Astrocyte of the cerebellum (primary cell): ENCODE measurements at regions of chr7 and their contacts with region 1.

Region 1: DNA sequence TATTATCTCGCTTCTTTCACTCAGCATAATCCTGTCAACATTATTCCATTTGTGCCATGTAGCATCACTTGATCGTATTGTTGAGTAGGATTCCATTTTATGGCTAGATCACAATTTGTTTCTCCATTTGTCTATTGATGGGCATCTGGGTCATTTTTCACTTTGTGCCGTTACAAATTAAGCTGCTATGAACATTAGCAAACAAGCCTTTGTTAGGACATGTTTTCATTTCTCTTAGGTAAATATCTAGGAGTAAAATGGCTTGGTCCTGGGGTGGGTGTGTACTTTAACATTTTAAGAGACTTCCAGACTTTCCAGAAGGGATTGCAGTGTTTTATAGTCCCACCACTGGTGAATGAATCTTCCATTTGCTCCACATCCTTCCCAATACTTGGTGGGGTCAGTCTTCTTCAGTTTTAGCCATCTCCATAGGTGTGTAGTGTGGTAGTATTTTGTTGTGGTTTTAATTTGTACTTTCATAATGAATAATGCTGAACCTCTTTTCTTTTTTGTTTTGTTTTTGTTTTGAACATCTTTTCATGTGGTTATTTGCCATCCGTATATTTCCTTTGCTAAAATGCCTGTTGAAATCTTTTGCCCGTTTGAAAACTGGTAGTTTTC is 86.2 kb downstream of the ANKRD61 start:
- DNase-seq: no peak
- H3K4me3 ChIP-seq: no peak overlapping the region
- CTCF ChIP-seq: no peak

Region 2: GRCh38 chr7:6008668-6009611 is 108.5 kb before region 1 on chr7 and contains the starts of genes AIMP2 and PMS2:
- in situ Hi-C with region 1: loop called (anchors 10 kb)
- DNase-seq: peak; percentile 95
- H3K4me3 ChIP-seq: peak within 1 kb of the TSS; percentile 88
- CTCF ChIP-seq: peak; percentile 12

Region 3: GRCh38 chr7:6148724-6149360 is 31.4 kb after region 1 on chr7:
- in situ Hi-C with region 1: no loop called
- DNase-seq: no peak
- H3K4me3 ChIP-seq: no peak overlapping the region
- CTCF ChIP-seq: no peak

Region 4: GRCh38 chr7:6175645-6176044 is 58.2 kb after region 1 on chr7:
- in situ Hi-C with region 1: no loop called
- DNase-seq: peak; percentile 6
- H3K4me3 ChIP-seq: no peak overlapping the region
- CTCF ChIP-seq: no peak